Activated naive CD4-positive, alpha-beta T cell treated with anti-CD3 and anti-CD28 coated beads for 36 hours (primary cell): ENCODE measurements at regions of chr1 and their contacts with region 1.

Region 1: DNA sequence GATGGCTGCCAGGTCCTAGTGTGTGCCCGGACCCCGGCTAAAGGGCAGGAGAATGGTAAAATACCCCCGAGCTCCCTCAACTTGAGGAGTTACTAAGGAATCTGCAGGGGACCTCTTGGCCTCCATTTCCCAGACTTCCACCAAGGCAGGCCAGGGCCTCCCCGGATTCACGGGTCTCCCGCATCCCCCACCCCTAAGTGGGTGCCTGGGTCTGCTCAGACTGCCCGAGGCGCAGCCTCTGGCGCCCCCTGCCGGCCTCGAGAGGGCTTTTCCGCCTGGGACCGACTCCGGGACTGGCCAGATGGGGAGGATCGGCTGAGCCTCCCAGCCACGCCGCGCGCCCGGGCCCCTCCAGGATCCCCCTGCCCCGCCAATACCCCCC is 1.7 kb downstream of the PLEKHG5 start:
- DNase-seq: peak; percentile 87
- H3K4me3 Mint-ChIP-seq: peak overlapping the region; percentile 72
- H3K27ac Mint-ChIP-seq: peak overlapping the region; percentile 36
- H3K4me1 Mint-ChIP-seq: peaks cover 24% of the 10 kb centered on the region
- H3K27me3 Mint-ChIP-seq: peaks cover 10% of the 10 kb centered on the region

Region 2: DNA sequence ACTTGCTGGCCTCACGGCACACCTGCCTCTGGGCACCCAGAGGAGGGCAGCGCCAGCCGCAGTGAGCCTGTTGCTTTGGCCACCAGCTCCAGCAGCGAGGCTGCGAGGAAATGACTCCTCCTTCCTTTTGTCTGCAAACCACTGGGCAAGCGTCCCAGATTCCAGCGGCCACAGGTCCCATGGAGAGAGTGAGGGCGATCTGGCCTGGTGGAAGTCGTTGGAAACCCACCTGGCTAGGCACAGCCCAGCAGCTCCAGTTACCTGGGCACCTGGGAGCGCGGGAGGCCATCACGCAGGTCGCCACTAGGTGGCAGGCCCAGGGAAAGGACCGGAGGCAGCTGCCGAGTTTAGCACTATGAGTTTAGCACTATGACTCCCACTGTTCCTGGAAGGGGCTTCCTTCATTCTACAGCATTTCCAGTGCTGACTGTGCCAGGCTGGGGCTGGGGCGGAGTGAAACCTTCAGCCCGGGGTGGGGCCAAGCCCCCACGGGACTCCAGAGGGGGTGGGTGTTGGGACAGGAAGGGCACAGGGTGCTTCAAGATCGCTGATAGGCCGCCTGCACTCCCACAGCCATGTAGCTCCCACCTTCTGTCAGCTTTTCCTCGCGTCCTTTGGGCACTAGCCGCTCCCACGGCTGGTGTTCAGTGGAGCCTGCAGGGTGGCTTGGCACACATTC is 66.3 kb before region 1 on chr1:
- CTCF ChIA-PET with region 1: interaction called, 4 read pairs
- intact Hi-C with region 1: loop called (anchors 1 kb)
- DNase-seq: peak; percentile 87
- H3K4me3 Mint-ChIP-seq: peak overlapping the region; percentile 18
- H3K27ac Mint-ChIP-seq: no peak overlapping the region
- H3K4me1 Mint-ChIP-seq: peaks cover 10% of the 10 kb centered on the region
- H3K27me3 Mint-ChIP-seq: peaks cover 39% of the 10 kb centered on the region

Region 3: GRCh38 chr1:6464514-6464836 is 25.3 kb before region 1 on chr1:
- CTCF ChIA-PET with region 1: interaction called, 6 read pairs
- intact Hi-C with region 1: loop called (anchors 1 kb)
- DNase-seq: peak; percentile 85
- H3K4me3 Mint-ChIP-seq: peak overlapping the region; percentile 92
- H3K27ac Mint-ChIP-seq: peak overlapping the region; percentile 87
- H3K4me1 Mint-ChIP-seq: peaks cover 51% of the 10 kb centered on the region
- H3K27me3 Mint-ChIP-seq: no peaks in the 10 kb centered on the region

Region 4: DNA sequence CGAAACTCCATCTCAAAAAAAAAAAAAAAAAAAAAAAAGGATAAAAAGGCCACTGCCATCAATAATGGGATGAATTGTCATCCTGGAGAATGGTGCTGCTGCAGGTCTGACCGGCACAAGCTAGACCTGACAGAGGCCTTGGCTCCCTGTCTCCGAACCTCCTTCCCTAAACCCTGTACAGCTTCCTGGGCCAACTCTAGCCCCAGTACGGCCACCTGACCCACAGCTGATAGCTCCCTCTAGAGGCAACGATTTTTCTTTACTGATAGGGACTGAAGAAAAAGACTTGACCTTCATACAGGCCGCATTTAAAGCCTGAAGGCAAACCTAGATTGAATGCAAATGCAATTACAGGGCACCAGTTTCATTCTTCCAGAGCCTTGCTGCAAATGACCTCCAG is 33.8 kb after region 1 on chr1:
- CTCF ChIA-PET with region 1: interaction called, 17 read pairs
- intact Hi-C with region 1: loop called (anchors 5 kb)
- DNase-seq: no peak
- H3K4me3 Mint-ChIP-seq: no peak overlapping the region
- H3K27ac Mint-ChIP-seq: no peak overlapping the region
- H3K4me1 Mint-ChIP-seq: no peaks in the 10 kb centered on the region
- H3K27me3 Mint-ChIP-seq: no peaks in the 10 kb centered on the region

Region 5: DNA sequence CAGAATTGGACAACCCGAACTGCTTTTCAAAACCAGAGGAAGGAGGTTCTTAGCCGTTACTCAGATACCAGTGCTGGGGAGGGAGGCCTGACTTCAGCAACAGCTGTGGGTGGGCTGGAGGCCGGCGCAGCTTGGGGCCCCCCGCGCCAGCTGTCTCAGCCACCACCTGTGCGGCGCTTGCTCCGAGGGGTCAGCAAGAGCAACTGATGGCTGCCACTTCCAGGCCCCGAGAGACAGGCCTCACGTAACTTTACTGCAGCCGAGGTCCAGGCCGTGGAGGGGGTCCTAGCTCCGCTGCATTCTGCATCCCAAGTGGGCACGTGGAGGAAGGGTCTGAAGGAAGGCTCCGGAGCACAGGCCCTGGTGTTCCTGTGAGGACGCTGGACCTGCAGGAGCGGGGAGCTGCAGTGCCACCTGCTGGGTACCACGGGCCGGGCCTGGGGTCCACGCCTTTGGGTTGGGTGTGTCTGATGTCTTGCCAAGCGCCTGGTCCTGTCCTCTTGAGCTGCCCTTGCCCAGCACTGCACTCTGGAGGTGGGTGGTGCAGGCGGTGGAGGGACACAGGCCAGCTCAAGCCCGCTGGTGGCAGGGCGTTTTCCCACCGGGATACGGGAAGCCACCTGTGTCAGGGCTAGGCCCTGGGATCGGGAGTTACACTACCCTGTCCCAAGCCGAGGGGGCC is 144.7 kb after region 1 on chr1:
- CTCF ChIA-PET with region 1: no interaction called
- intact Hi-C with region 1: loop called (anchors 5 kb)
- DNase-seq: peak; percentile 73
- H3K4me3 Mint-ChIP-seq: no peak overlapping the region
- H3K27ac Mint-ChIP-seq: peak overlapping the region; percentile 26
- H3K4me1 Mint-ChIP-seq: peaks cover under 1% of the 10 kb centered on the region
- H3K27me3 Mint-ChIP-seq: no peaks in the 10 kb centered on the region

Region 6: DNA sequence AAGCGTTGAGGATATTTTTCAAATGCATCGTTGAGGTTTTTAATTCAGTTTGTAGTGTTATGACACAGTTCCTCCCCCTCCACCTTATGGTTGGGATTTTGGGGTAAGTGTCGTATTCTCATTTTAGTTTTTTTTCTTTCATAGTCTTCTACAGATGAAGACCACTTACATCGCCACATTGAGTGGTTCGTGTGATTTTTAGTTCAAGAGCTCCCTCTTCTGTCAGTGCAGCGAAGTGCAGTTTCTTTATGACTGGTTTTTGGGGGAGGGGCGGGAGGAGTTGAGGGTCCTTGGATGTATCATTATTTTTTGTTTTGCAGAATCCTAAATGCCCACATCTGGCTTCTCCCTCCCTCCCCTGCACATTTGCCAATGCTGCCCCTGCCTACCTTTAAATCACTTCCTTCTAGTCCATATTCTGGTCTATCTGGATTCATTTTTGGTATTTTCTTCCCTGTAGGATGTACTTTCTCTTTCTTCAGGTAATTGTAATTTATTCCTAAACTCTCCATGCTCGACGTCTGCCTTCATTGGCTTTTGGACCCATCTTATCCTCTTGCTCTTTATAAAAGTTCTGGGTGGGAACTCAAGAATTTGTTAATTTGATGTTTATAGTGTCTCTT is 728.5 kb after region 1 on chr1:
- CTCF ChIA-PET with region 1: no interaction called
- intact Hi-C with region 1: loop called (anchors 5 kb)
- DNase-seq: peak; percentile 57
- H3K4me3 Mint-ChIP-seq: no peak overlapping the region
- H3K27ac Mint-ChIP-seq: no peak overlapping the region
- H3K4me1 Mint-ChIP-seq: peaks cover 2% of the 10 kb centered on the region
- H3K27me3 Mint-ChIP-seq: peaks cover 24% of the 10 kb centered on the region